ENCODE measurements at regions of chr10 and their contacts with region 1.

Region 1: GRCh38 chr10:16843252-16843870 is 26.1 kb upstream of the RSU1 start:
- DNase-seq: peak; percentile 54
- ATAC-seq: peak; percentile 88
- H3K4me3 ChIP-seq: no peak overlapping the region
- H3K27ac ChIP-seq: peak overlapping the region; percentile 75
- H3K4me1 ChIP-seq: peaks cover 9% of the 10 kb centered on the region
- H3K27me3 ChIP-seq: no peaks in the 10 kb centered on the region
- CTCF ChIP-seq: peak; percentile 43; the same call in 1 of the 2 replicates

Region 2: DNA sequence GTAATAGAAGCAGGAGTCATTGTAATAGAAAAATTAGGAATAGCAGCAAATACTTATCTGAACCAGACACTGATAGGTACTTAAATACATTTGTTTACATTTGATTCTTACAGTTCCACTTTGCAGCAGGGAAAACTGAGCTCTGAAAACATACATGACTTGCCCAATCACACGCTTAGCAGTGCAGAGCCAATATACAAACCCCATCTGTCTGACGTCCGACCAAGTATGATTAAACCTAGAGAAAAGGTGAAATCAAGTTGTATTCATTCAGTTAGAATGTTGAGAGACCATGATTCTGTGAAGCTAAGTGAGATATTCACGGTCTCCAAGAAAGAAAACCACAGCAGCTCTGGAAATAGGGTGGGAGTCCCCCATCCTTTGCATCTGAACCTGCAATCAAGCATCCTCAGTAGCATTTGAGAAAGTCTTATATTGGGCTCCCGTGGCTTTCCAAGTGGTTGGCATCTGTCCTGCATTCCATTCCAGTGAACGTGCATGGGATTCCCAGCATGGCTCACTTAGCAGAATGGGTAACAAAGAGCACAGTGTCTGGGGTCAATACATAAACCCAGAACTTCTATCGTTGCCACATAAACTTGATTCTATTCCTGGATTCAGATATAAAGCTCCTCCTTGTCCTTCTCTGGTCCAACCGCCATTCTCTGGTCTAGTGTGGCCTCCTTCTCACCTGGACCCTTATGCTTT is 122.5 kb after region 1 on chr10:
- CTCF ChIA-PET with region 1: no interaction called
- POLR2A ChIA-PET with region 1: no interaction called
- in situ Hi-C with region 1: no loop called
- intact Hi-C with region 1: loop called (anchors 10 kb)
- DNase-seq: peak; percentile 84
- ATAC-seq: peak; percentile 91
- H3K4me3 ChIP-seq: peak overlapping the region in 1 of 2 experiments; percentile 5; a peak in 1 of 4 replicates
- H3K27ac ChIP-seq: peak overlapping the region; percentile 99
- H3K4me1 ChIP-seq: peaks cover 43% of the 10 kb centered on the region
- H3K27me3 ChIP-seq: no peaks in the 10 kb centered on the region
- CTCF ChIP-seq: no peak

Region 3: DNA sequence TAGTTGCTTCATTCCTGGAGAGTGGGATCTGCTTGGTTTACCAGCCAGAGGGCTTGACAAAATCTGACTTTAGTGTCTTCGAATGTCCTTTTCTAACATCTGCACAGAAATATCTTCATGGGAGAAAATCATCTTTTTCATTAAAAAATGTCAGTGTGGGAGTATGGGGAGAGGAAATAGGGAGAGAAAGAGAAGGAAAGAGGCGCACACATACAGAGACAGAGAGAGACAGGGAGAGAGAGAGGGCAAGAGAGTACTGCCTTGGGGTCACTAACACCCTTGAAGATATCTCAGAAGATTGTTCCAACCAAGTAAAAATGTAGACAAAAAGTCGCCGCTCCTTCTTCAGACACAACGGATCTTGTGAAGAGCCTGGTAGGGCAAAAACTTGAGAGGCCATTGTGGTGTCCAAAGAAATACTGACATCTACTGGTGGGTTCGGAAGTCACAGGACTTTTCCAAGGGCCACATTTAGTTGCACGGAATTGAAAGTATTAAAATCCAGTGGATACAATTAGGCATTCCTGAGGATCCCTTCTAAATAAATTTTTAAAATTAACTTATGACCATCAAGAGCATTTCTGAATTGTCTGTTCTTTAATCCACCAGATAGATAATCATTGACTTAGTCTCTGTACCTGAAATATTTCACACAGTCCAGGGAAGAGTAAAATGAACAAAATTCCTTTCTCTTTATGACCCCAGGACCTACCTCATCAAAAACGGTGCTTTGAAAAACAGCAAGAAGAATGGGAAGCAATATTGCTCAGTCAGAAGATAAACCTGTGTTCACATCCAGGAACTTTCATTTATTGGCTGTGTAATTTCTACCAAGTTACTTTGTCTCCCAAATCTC is 414.3 kb after region 1 on chr10:
- CTCF ChIA-PET with region 1: no interaction called
- POLR2A ChIA-PET with region 1: no interaction called
- in situ Hi-C with region 1: no loop called
- intact Hi-C with region 1: loop called (anchors 5 kb)
- DNase-seq: no peak
- ATAC-seq: peak; percentile 95
- H3K4me3 ChIP-seq: peak overlapping the region in 1 of 2 experiments; percentile 48; a peak in 2 of 4 replicates
- H3K27ac ChIP-seq: peak overlapping the region; percentile 89
- H3K4me1 ChIP-seq: peaks cover 7% of the 10 kb centered on the region
- H3K27me3 ChIP-seq: no peaks in the 10 kb centered on the region
- CTCF ChIP-seq: peak; percentile 80